ENCODE measurements at regions of chr4 and their contacts with region 1.

Region 1: GRCh38 chr4:166091912-166092510 is 219.0 kb downstream of the TLL1 start:
- DNase-seq: peak; percentile 13
- ATAC-seq: no peak
- H3K4me3 ChIP-seq: no peak overlapping the region
- H3K27ac ChIP-seq: no peak overlapping the region
- H3K4me1 ChIP-seq: no peaks in the 10 kb centered on the region
- H3K27me3 ChIP-seq: no peaks in the 10 kb centered on the region
- CTCF ChIP-seq: peak; percentile 50; the same call in 1 of the 2 replicates

Region 2: GRCh38 chr4:165493359-165493758 is 598.7 kb before region 1 on chr4:
- CTCF ChIA-PET with region 1: interaction called, 7 read pairs
- POLR2A ChIA-PET with region 1: no interaction called
- in situ Hi-C with region 1: no loop called
- intact Hi-C with region 1: loop called (anchors 2 kb)
- DNase-seq: peak; percentile 33
- ATAC-seq: peak; percentile 99
- H3K4me3 ChIP-seq: no peak overlapping the region
- H3K27ac ChIP-seq: no peak overlapping the region
- H3K4me1 ChIP-seq: peaks cover 2% of the 10 kb centered on the region; the same call in 1 of the 2 replicates
- H3K27me3 ChIP-seq: no peaks in the 10 kb centered on the region; the same call in 1 of the 2 replicates
- CTCF ChIP-seq: peak; percentile 79

Region 3: DNA sequence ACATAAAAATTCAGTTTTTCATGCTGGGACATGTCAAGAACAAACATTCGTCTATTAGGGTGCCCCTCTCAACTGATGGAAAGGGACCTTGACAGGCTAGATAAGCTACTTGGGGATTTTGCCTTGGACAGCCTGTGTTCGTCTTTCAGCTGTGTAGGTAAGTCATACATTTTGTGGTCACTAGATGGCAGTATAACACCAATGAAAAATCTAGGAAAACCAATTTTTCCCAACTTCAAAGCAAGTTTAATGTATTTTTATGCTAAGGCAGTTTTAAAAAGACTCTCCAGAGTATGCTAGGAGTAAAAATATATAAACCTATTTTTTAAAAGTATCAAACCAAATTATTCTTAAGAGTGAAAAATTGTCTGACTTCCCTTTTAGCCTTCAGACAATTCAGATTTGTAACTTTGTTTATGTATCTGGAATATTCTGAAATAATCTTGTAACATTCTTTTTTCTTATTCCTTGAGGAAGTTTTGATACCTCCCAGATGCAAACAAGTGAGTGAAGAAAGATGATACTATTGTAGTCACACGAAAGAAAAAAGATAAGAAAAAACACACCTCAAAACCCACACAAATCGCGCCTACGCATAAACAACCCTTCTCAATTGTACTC is 554.9 kb before region 1 on chr4:
- CTCF ChIA-PET with region 1: interaction called, 4 read pairs
- POLR2A ChIA-PET with region 1: no interaction called
- in situ Hi-C with region 1: no loop called
- intact Hi-C with region 1: loop called (anchors 2 kb)
- DNase-seq: peak; percentile 30
- ATAC-seq: no peak; the same call in 1 of the 2 replicates
- H3K4me3 ChIP-seq: no peak overlapping the region
- H3K27ac ChIP-seq: no peak overlapping the region
- H3K4me1 ChIP-seq: no peaks in the 10 kb centered on the region
- H3K27me3 ChIP-seq: no peaks in the 10 kb centered on the region
- CTCF ChIP-seq: peak; percentile 43

Region 4: GRCh38 chr4:165864271-165864670 is 227.7 kb before region 1 on chr4:
- CTCF ChIA-PET with region 1: no interaction called
- POLR2A ChIA-PET with region 1: no interaction called
- in situ Hi-C with region 1: no loop called
- intact Hi-C with region 1: loop called (anchors 10 kb)
- DNase-seq: no peak
- ATAC-seq: no peak
- H3K4me3 ChIP-seq: no peak overlapping the region
- H3K27ac ChIP-seq: no peak overlapping the region
- H3K4me1 ChIP-seq: no peaks in the 10 kb centered on the region
- H3K27me3 ChIP-seq: no peaks in the 10 kb centered on the region
- CTCF ChIP-seq: peak; percentile 47

Measured in Panc1 (cell line).